ENCODE measurements at regions of chr22 and their contacts with region 1.

Region 1: GRCh38 chr22:50185384-50186087 is at the start of gene TRABD:
- DNase-seq: peak; percentile 93
- H3K4me3 Mint-ChIP-seq: peak within 1 kb of the TSS; percentile 88
- H3K27ac Mint-ChIP-seq: peak within 1 kb of the TSS; percentile 89
- H3K4me1 Mint-ChIP-seq: peaks cover 28% of the 10 kb centered on the region
- H3K27me3 Mint-ChIP-seq: no peaks in the 10 kb centered on the region
- total RNA-seq, gene TRABD: 88.6 to 89.2 TPM

Region 2: DNA sequence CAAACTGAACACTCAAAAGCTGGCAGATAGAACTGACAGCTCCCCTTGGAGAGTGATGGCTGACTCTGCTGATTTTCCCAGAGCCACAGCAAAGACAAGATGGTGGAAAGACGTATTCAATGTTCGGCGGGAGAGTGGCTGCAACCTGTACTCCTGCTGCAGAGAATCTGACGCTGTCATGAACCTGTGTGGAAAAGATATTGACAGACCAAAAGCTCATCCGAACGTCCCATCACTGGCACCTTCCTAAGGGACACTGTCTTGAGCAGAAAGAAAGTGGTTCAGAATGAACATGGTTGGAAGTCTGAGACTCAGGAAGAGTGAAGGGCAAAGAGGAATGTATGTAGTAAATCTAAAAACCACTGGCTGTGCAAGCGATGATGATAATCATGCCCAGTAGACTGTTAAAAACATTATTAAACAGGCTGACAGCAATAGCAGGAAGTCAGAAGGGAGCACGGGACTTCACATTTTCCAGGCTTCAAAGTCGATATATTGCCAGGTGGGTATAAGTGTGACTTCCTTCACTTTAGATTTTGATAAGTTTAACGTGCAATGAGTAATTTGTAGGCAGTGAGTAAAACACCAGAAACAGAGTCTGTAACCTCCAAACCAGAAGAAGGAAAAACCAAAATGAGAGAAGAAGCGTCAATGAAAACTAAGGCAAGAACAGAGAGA is 166.8 kb before region 1 on chr22:
- CTCF ChIA-PET with region 1: no interaction called
- POLR2A ChIA-PET with region 1: no interaction called
- intact Hi-C with region 1: loop called (anchors 2 kb)
- DNase-seq: peak; percentile 69
- H3K4me3 Mint-ChIP-seq: peak overlapping the region; percentile 74
- H3K27ac Mint-ChIP-seq: no peak overlapping the region
- H3K4me1 Mint-ChIP-seq: no peaks in the 10 kb centered on the region
- H3K27me3 Mint-ChIP-seq: no peaks in the 10 kb centered on the region

Region 3: DNA sequence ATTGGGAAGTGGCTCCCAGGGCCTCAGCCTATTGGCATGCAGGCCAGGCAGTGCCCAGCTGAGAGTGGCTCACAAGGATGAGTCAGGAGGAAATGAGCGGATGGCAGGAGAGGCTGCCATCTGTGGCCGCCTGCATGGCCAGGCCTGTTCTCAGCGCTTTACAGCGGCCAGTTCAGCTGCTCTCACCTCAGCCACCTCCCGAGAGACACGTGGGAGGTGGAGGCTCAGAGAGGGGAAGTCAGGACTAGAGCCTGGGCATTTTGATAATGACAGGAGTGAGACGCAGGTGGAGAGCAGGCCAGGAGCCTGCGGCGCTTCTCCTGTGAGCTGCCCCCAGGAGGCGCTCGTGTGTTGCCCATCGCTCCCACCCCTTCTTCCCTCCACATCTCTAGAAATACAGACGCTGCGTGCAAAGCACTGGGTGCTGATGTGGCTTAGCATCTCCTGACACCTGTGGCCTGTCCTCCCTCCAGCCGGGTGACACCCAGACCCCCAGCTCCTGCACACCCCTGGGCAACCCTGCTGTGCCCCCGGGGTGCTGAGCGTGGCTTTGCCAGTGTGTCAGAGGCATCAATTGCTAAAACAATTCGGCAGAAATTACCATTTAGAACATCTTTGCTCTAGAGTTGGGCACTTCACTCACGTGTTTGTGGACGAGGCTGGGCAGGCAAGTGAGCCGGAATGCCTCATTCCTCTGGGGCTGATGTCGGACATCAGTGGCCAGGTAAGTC is 36.4 kb before region 1 on chr22:
- CTCF ChIA-PET with region 1: interaction called, 11 read pairs
- POLR2A ChIA-PET with region 1: no interaction called
- intact Hi-C with region 1: no loop called
- DNase-seq: peak; percentile 83
- H3K4me3 Mint-ChIP-seq: no peak overlapping the region
- H3K27ac Mint-ChIP-seq: peak overlapping the region; percentile 51
- H3K4me1 Mint-ChIP-seq: peaks cover 4% of the 10 kb centered on the region
- H3K27me3 Mint-ChIP-seq: peaks cover 2% of the 10 kb centered on the region

Region 4: GRCh38 chr22:50169774-50170341 is 15.7 kb before region 1 on chr22:
- CTCF ChIA-PET with region 1: interaction called, 4 read pairs
- POLR2A ChIA-PET with region 1: interaction called, 5 read pairs
- intact Hi-C with region 1: loop called (anchors 2 kb)
- DNase-seq: peak; percentile 84
- H3K4me3 Mint-ChIP-seq: peak overlapping the region; percentile 35
- H3K27ac Mint-ChIP-seq: no peak overlapping the region
- H3K4me1 Mint-ChIP-seq: peaks cover 9% of the 10 kb centered on the region
- H3K27me3 Mint-ChIP-seq: peaks cover 29% of the 10 kb centered on the region

Region 5: GRCh38 chr22:50200461-50201190 is 15.1 kb after region 1 on chr22 and contains the start of gene SELENOO:
- CTCF ChIA-PET with region 1: interaction called, 5 read pairs
- POLR2A ChIA-PET with region 1: interaction called, 12 read pairs
- intact Hi-C with region 1: loop called (anchors 1 kb)
- DNase-seq: peak; percentile 94
- H3K4me3 Mint-ChIP-seq: peak within 1 kb of the TSS; percentile 79
- H3K27ac Mint-ChIP-seq: no peak within 1 kb of the TSS
- H3K4me1 Mint-ChIP-seq: peaks cover 22% of the 10 kb centered on the region
- H3K27me3 Mint-ChIP-seq: no peaks in the 10 kb centered on the region
- total RNA-seq, gene SELENOO: 18.8 to 19.7 TPM

Region 6: GRCh38 chr22:50244420-50245213 is 59.1 kb after region 1 on chr22 and contains the start of gene TUBGCP6:
- CTCF ChIA-PET with region 1: interaction called, 3 read pairs
- POLR2A ChIA-PET with region 1: interaction called, 3 read pairs
- intact Hi-C with region 1: loop called (anchors 5 kb)
- DNase-seq: peak; percentile 95
- H3K4me3 Mint-ChIP-seq: peak within 1 kb of the TSS; percentile 91
- H3K27ac Mint-ChIP-seq: peak within 1 kb of the TSS; percentile 90
- H3K4me1 Mint-ChIP-seq: peaks cover 41% of the 10 kb centered on the region
- H3K27me3 Mint-ChIP-seq: no peaks in the 10 kb centered on the region
- total RNA-seq, gene TUBGCP6: 41.4 to 43.8 TPM

Measured in activated CD4-positive, alpha-beta memory T cell treated with anti-CD3 and anti-CD28 coated beads for 36 hours (primary cell).